ENCODE measurements at regions of chr11 and their contacts with region 1.

Region 1: DNA sequence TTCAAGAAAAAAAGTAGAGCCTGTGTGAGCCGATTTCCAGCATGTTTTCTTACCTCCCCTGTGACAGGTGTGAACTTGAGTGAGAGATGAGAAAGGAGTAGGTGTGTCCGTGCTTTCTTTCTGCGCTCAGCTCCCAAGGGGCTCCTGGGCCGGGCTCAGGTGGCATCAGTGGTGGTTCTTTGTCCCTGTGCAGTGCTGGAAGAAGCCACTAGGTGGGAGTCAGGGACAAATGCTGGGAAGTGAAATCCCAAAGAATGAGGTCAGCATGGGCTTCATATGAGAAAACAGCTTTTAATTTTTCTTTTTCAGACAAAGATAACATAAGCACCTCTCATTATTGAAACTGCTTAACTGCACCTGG is 57.8 kb downstream of the PPFIBP2 start:
- DNase-seq: no peak
- H3K4me3 ChIP-seq: no peak overlapping the region
- CTCF ChIP-seq: peak; percentile 89

Region 2: GRCh38 chr11:7138051-7138450 is 433.6 kb before region 1 on chr11:
- CTCF ChIA-PET with region 1: no interaction called
- POLR2A ChIA-PET with region 1: no interaction called
- DNase-seq: no peak
- H3K4me3 ChIP-seq: no peak overlapping the region
- CTCF ChIP-seq: no peak

Region 3: DNA sequence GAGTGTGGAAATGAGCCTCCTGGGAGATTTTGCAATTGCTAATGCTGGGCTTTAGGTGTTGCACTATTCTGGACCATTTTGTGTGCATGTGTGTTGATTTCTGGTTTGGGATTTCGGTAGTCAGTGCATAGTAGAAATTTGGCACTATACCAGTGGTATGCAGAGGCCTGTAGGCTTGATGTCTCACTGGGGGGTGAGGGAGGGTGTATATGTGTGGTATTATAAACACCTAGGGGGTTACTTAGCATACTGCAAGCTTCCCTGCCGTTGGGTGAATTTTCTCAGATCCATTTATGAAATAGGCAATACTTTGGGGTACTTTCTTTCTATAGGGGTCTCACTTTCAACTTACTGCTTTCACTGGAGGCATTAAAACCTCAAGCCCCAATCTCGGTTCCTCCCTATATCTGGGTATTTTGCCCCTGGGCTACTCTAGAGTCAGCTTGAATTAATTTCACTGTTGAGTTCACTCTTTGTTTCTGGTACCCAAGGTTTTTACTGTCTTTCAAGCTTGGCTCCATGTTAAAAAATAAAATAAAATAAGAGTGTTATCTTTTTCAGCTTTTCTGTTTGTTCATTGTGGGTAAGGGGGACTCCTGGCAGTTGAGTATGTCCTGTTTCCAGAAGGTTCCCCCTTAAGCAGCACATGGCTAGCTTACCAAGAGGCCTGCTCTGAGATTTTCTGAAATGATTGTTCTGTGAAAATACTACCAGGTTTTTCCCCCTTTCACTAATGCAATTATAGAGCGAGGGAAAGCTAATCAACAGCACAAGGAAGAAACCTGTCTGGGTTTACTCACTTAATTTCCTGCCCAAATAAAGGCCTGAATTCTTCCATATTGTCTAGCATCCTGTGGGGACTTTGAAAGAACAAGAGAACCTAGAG is 12.0 kb before region 1 on chr11:
- CTCF ChIA-PET with region 1: interaction called, 59 read pairs
- POLR2A ChIA-PET with region 1: no interaction called
- DNase-seq: no peak
- H3K4me3 ChIP-seq: no peak overlapping the region
- CTCF ChIP-seq: no peak

Region 4: DNA sequence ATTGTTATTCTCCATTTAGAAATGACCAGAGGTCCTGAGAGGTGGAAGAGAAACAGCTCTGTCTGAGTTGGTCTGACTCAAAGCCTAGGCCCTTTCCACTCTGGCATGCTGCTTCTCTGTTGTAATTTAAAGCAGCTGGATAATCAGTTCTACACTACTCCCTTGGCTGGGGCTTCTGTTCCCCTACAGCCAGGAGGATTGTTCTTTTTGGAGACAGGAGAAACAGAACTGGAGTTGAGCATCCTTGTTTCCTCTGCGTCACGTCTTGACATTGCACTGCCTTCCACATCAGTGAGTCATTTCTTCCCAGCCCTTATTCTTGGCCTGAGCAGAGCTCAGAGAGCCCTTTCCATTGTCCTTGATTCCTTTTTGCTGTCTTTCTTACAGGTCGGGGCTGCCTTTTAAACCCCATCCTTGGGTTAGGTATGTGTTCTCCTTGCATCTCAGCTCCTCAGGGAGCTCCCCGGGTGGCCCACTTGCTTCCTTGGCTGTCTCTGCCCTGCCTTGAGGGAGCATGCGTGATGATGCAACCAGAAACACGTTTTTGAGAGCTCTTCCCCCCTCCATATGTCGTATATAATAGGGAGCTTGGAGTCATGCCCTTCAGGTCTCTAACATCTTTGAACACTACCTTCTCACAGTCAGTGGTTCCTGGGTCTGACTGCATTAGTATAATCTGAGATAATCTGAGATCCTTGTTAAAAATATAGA is 66.0 kb after region 1 on chr11:
- CTCF ChIA-PET with region 1: interaction called, 34 read pairs
- POLR2A ChIA-PET with region 1: no interaction called
- DNase-seq: peak; percentile 7
- H3K4me3 ChIP-seq: no peak overlapping the region
- CTCF ChIP-seq: no peak

Region 5: DNA sequence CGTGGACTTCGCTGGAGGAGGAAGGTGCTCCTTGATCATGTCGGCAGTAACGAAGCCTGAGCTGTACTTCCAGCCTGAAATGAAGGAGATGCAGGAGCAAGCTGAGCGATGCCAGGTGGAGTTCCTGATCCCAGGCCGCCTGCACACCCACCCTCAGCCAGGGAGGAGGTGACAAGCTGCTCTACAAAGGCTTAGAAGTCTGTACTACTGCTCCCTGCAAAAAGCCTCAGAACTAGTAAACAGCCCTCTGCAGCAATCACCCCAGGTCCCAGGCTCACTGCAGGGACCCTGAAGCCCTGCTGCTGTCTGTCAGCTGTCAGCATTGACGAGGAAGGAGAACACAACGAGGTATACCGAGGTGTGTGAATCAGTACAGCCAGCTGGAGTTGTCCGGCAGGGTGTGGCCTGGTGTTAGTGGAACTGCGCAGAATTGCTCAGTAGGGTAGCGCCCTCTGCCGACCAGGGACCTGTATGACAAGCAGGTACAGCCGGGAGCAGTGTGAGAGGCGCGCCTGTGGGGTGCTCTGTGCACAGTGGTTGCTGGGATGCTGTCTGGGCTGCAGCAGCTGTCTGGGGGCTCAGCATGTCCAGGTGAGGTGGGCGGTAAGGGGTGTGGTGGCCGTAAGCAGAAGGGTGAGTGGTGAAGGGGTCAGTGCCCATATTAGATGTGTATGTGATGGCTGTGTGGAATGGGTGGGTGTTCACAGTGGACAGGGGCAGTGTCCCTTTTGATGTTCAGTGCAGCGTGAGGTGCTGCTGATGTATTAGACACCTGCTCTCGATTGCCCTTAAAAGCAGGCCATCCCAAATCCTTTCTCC is 94.1 kb after region 1 on chr11:
- CTCF ChIA-PET with region 1: interaction called, 185 read pairs
- POLR2A ChIA-PET with region 1: no interaction called
- DNase-seq: no peak
- H3K4me3 ChIP-seq: no peak overlapping the region
- CTCF ChIP-seq: peak; percentile 86

Region 6: GRCh38 chr11:7696424-7696823 is 124.8 kb after region 1 on chr11:
- CTCF ChIA-PET with region 1: interaction called, 262 read pairs
- POLR2A ChIA-PET with region 1: no interaction called
- DNase-seq: no peak
- H3K4me3 ChIP-seq: no peak overlapping the region
- CTCF ChIP-seq: no peak

Region 7: DNA sequence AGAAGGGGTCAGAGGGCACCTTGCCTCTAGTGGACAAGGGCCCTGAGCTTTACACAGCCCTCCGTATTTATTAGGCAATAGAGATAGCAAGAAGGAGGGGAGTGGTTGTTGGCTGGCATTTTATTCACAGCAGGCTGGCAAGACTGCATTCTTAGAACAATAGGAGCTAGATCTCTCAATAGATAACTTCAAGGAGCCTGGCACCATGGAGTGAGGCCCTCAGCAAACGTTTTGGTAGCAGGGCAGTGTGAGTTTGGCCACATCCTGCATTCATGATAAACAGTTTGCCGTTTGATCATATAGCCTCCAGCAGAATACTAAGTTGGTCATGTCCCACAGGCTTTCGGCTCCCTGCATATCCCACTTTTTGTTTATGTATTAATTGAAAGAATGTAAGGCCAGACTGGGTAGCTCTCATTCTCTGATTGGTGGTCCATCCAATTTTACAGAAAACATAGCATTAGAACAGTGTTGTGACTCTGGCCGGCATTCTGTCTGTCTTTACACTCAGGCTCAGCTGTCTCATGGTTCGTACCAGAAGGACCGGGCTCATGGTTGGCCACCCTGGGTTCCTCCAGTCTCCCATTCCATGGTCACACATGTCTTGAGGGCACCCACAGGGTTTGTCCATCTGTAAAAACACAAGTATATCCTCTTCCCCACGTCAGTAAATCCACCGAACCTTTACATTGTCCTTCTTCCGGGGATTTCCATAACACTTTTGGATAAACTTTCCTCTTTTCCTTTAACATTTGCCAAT is 328.0 kb after region 1 on chr11:
- CTCF ChIA-PET with region 1: no interaction called
- POLR2A ChIA-PET with region 1: no interaction called
- DNase-seq: no peak
- H3K4me3 ChIP-seq: no peak overlapping the region
- CTCF ChIP-seq: no peak